ENCODE measurements at regions of chr9 and their contacts with region 1.

Region 1: GRCh38 chr9:14532716-14533115 is 160.5 kb downstream of the ZDHHC21 start:
- DNase-seq: no peak
- H3K4me3 ChIP-seq: no peak overlapping the region
- H3K27ac ChIP-seq: no peak overlapping the region
- H3K4me1 ChIP-seq: peaks cover 12% of the 10 kb centered on the region
- H3K27me3 ChIP-seq: no peaks in the 10 kb centered on the region
- CTCF ChIP-seq: no peak
- POLR2A ChIP-seq: no peak

Region 2: DNA sequence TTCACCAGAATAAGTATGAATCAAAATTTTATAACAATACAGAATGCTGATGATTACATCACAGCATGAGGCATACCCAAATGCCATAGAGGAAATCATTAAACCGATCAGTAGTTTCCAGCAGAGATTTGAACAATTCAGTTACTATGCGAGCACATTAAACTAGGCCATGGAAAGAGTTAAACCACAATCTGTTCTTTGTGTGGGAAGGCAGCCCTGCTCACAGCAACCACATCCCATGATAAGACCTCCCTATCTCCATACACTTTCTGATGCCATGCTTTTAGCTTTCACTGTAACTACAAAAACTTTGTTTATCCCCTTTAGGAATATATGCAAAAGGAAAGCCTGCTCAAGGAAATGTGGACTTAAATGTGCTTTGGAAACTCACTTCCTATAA is 223.3 kb before region 1 on chr9:
- intact Hi-C with region 1: no loop called
- DNase-seq: no peak
- H3K4me3 ChIP-seq: peak overlapping the region; percentile 12 to 86
- H3K27ac ChIP-seq: no peak overlapping the region
- H3K4me1 ChIP-seq: peaks cover 38% of the 10 kb centered on the region
- H3K27me3 ChIP-seq: no peaks in the 10 kb centered on the region
- CTCF ChIP-seq: no peak
- POLR2A ChIP-seq: no peak

Region 3: GRCh38 chr9:14515571-14516198 is 17.0 kb before region 1 on chr9:
- intact Hi-C with region 1: loop called (anchors 1 kb)
- DNase-seq: no peak
- H3K4me3 ChIP-seq: no peak overlapping the region
- H3K27ac ChIP-seq: no peak overlapping the region
- H3K4me1 ChIP-seq: no peaks in the 10 kb centered on the region
- H3K27me3 ChIP-seq: no peaks in the 10 kb centered on the region
- CTCF ChIP-seq: no peak
- POLR2A ChIP-seq: no peak

Measured in vagina (tissue), 2 donors.